Activated B cell treated with CpG ODN at 0.5 μM for 24 hours (primary cell): ENCODE measurements at regions of chr12 and their contacts with region 1.

Region 1: DNA sequence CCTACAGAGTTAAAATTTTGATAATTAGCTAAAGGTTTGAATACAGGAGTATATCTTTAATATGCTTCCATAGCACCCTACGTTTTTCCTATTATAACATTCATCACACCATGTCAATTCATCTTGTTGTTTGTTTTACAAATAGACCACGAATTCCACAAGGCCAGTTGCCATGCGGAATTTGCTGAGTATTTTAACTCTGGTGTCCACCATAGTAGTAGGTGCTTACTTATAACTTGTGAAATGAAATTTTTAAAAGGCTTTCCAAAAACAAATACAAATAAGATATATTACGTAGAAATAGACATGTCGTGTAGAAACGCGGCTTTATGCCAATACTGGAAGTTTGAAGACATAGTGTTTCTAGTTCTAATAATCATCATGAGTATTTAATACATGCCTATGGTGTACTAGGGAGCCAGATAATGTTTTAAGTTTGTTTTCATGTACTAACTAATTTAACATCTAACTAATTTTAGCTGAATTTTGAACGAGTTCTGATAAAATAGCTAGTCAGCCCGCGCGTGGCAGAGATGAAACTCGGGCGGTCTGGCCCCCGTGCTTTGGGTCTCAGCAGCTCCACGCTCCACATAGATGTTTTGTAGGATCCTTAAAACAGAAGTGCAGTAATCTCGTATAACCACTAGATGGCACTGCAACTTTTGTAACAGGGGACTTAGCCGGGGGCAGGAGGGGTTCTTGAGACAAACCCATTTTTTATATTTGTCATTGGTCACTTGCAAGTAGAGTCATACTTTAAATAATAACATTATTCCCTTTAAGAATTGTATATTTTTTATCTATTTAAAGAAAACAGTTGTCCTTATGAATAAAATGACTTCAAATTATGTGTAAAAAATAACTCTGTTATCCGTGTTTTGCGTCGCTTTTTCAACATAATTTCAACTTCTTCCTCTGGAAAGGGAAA is 10.2 kb downstream of the CD69 start:
- DNase-seq: no peak
- ATAC-seq: peak; percentile 85
- H3K4me3 Mint-ChIP-seq: no peak overlapping the region
- H3K27ac Mint-ChIP-seq: peak overlapping the region; percentile 57
- H3K4me1 Mint-ChIP-seq: peaks cover 35% of the 10 kb centered on the region
- H3K27me3 Mint-ChIP-seq: no peaks in the 10 kb centered on the region
- CTCF ChIP-seq: no peak

Region 2: DNA sequence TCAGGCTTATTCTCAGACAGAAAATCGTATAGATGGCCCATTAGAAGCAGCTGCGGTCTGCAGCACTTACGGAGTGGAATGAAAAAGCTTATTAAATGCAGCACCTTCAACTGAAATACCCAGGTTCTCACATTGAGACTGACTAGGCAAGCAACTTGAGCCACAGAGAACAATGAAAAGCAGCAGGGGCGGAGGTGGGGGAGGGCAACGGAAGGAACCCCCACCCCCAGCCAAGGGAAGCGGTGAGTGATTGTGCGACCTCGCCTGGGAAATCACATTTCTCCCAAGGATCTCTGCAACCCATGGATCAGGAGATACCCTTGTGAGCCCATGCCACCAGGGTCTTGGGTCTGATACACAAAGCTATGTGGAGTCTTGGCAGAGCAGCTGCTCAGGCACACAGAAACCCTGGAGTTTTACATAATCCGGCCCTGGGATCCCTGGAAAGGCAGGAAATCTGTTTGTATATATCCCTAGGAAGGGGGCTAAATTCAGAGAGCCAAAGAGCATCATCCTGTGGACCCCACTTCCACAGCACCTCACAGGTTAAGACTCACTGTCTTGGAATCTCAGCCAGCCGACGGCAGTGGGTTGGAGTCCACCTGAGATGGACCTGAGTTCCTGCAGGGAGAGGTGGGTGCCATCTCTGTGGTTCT is 580.4 kb before region 1 on chr12:
- CTCF ChIA-PET with region 1: no interaction called
- POLR2A ChIA-PET with region 1: no interaction called
- intact Hi-C with region 1: no loop called
- DNase-seq: no peak
- ATAC-seq: no peak
- H3K4me3 Mint-ChIP-seq: no peak overlapping the region
- H3K27ac Mint-ChIP-seq: no peak overlapping the region
- H3K4me1 Mint-ChIP-seq: no peaks in the 10 kb centered on the region
- H3K27me3 Mint-ChIP-seq: peaks cover 12% of the 10 kb centered on the region
- CTCF ChIP-seq: no peak

Region 3: GRCh38 chr12:9634177-9634803 is 116.2 kb before region 1 on chr12:
- CTCF ChIA-PET with region 1: interaction called, 44 read pairs
- POLR2A ChIA-PET with region 1: no interaction called
- intact Hi-C with region 1: loop called (anchors 1 kb)
- DNase-seq: no peak
- ATAC-seq: peak; percentile 80
- H3K4me3 Mint-ChIP-seq: peak overlapping the region; percentile 66
- H3K27ac Mint-ChIP-seq: peak overlapping the region; percentile 86
- H3K4me1 Mint-ChIP-seq: peaks cover 60% of the 10 kb centered on the region
- H3K27me3 Mint-ChIP-seq: no peaks in the 10 kb centered on the region
- CTCF ChIP-seq: peak; percentile 57

Region 4: GRCh38 chr12:9760699-9761418 is 10.3 kb after region 1 on chr12 and contains the start of gene CD69:
- CTCF ChIA-PET with region 1: interaction called, 53 read pairs
- POLR2A ChIA-PET with region 1: interaction called, 31 read pairs
- intact Hi-C with region 1: no loop called
- DNase-seq: peak; percentile 33
- ATAC-seq: peak; percentile 54
- H3K4me3 Mint-ChIP-seq: peak within 1 kb of the TSS; percentile 90
- H3K27ac Mint-ChIP-seq: peak within 1 kb of the TSS; percentile 93
- H3K4me1 Mint-ChIP-seq: peaks cover 81% of the 10 kb centered on the region
- H3K27me3 Mint-ChIP-seq: no peaks in the 10 kb centered on the region
- CTCF ChIP-seq: no peak
- total RNA-seq, gene CD69: 23.7 and 26.7 TPM in 2 replicates

Region 5: DNA sequence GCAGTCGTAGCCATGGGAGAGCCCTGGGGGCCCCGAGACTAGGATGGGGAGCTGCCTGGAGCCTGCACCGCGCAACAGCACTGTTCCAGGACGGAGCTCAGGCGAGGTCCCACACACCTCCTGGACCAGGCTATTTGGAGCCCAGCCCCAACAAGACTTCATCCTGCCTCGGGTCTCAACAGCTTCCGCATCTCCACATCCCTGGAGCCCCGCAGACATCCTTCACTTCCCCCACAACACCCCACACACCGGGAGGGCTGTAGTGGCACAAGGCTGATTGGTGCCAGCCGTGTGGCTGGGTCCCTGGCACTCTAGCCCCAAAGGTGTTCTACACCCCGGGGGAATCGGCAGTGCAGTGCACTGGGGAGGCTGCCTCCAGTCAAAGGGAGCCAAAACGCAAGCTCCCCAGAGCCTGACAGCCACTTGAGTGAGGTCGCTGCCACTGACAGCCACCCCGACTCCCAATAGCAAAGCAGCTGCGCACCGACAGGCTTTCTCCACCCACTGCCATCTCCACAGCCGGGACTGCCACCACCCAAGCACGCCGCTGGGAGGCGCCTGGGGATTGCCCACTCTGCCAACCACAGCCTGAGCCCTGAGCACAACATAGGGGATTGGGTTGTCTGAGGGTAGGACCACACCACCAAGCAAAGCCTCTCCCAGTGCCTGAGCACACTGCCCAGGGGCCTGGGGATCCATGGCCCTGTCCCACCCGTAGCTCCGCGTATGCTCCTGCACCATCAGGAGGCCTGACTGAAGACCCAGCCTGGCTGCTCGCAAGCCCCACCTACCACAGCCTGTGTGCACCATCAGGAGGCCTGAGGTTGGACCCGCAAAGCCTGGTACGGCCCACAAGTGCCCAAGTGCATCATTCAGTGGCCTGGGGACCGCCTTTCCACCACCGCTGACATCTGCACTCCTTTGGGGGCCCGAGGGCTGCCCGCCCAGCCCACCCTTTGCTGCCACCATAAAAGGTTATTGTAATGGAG is 63.6 kb after region 1 on chr12:
- CTCF ChIA-PET with region 1: interaction called, 55 read pairs
- POLR2A ChIA-PET with region 1: interaction called, 3 read pairs
- intact Hi-C with region 1: loop called (anchors 1 kb)
- DNase-seq: peak; percentile 80
- ATAC-seq: peak; percentile 97
- H3K4me3 Mint-ChIP-seq: peak overlapping the region; percentile 73
- H3K27ac Mint-ChIP-seq: no peak overlapping the region
- H3K4me1 Mint-ChIP-seq: peaks cover 20% of the 10 kb centered on the region
- H3K27me3 Mint-ChIP-seq: peaks cover 18% of the 10 kb centered on the region
- CTCF ChIP-seq: peak; percentile 47

Region 6: DNA sequence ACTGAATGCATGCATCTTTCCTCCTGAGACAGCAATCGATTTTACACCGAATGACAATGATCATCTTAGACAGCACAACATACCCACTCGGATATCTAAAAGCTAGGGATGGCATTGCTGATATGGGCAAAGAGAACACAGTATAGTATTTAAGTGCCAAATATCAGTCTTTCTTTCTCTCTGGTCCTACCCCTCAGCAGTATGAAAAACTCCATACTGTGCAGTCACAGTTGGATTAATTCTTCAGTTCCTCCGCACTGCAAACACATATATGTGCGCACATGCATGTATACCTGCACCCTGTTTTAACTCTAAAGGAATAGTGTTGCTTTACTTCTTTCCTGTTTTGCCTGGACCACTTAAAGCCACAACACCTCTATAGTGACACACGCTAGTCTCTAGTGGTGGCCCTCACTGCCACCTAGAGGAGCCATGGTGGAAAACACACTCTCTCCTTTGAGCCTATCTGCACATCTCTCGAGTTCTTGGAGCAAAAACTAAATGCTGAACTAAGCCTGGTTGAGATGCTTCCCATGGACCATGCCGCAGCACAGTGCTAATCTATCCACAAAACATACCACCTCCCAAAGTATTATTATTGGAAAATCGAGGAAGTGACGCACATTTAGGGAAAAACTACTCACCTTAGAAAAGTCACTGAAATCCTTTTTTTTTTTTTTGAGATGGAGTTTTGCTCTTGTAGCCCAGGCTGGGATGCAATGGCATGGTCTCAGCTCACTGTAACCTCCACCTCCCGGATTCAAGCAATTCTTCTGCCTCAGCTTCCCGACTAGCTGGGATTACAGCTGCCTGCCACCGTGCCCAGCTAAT is 440.2 kb after region 1 on chr12:
- CTCF ChIA-PET with region 1: interaction called, 5 read pairs
- POLR2A ChIA-PET with region 1: no interaction called
- intact Hi-C with region 1: loop called (anchors 2 kb)
- DNase-seq: no peak
- ATAC-seq: peak; percentile 94
- H3K4me3 Mint-ChIP-seq: no peak overlapping the region
- H3K27ac Mint-ChIP-seq: no peak overlapping the region
- H3K4me1 Mint-ChIP-seq: peaks cover 8% of the 10 kb centered on the region
- H3K27me3 Mint-ChIP-seq: peaks cover 51% of the 10 kb centered on the region
- CTCF ChIP-seq: peak; percentile 22